Caco-2 (cell line): ENCODE measurements at regions of chr15 and their contacts with region 1.

Region 1: GRCh38 chr15:96122077-96122681 is 208.3 kb upstream of the NR2F2 start:
- DNase-seq: no peak
- H3K4me3 ChIP-seq: no peak overlapping the region
- H3K4me3 Mint-ChIP-seq: peak overlapping the region; percentile 23
- H3K27ac Mint-ChIP-seq: peak overlapping the region; percentile 66
- H3K4me1 ChIP-seq: peaks cover 49% of the 10 kb centered on the region
- H3K4me1 Mint-ChIP-seq: peaks cover 54% of the 10 kb centered on the region
- H3K27me3 ChIP-seq: no peaks in the 10 kb centered on the region
- H3K27me3 Mint-ChIP-seq: no peaks in the 10 kb centered on the region
- CTCF ChIP-seq: no peak

Region 2: GRCh38 chr15:95799286-95800200 is 322.6 kb before region 1 on chr15:
- CTCF ChIA-PET with region 1: no interaction called
- POLR2A ChIA-PET with region 1: no interaction called
- intact Hi-C with region 1: no loop called
- DNase-seq: peak in 1 of 2 experiments; percentile 15
- H3K4me3 ChIP-seq: no peak overlapping the region
- H3K4me3 Mint-ChIP-seq: no peak overlapping the region
- H3K27ac Mint-ChIP-seq: no peak overlapping the region
- H3K4me1 ChIP-seq: peaks cover 5% of the 10 kb centered on the region; the same call in 1 of the 2 replicates
- H3K4me1 Mint-ChIP-seq: no peaks in the 10 kb centered on the region
- H3K27me3 ChIP-seq: no peaks in the 10 kb centered on the region
- H3K27me3 Mint-ChIP-seq: no peaks in the 10 kb centered on the region
- CTCF ChIP-seq: no peak

Region 3: GRCh38 chr15:95922431-95922830 is 199.7 kb before region 1 on chr15:
- CTCF ChIA-PET with region 1: no interaction called
- POLR2A ChIA-PET with region 1: no interaction called
- intact Hi-C with region 1: loop called (anchors 2 kb)
- DNase-seq: peak; percentile 52 to 57
- H3K4me3 ChIP-seq: no peak overlapping the region
- H3K4me3 Mint-ChIP-seq: no peak overlapping the region
- H3K27ac Mint-ChIP-seq: no peak overlapping the region
- H3K4me1 ChIP-seq: no peaks in the 10 kb centered on the region
- H3K4me1 Mint-ChIP-seq: peaks cover 7% of the 10 kb centered on the region
- H3K27me3 ChIP-seq: no peaks in the 10 kb centered on the region
- H3K27me3 Mint-ChIP-seq: no peaks in the 10 kb centered on the region
- CTCF ChIP-seq: peak in 1 of 2 experiments; percentile 33

Region 4: DNA sequence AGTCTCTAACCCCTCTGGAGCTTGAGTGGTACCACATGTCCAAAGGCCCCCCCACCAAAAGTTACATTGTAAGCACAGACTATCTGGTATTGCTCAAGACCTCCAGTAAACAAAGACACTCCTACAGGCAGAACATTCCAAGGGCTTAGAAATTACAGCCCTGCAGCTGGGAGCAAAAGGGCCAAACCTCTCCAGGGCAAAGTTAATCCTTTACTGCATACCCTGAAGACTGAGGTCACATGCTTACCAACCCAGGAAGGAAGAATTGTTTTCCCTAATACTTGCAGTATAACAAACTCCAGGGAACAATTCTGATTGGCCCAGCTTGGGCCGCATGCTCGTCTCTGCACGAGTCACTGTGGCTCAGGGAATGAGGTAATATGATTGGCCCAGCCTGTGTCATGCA is 57.8 kb before region 1 on chr15:
- CTCF ChIA-PET with region 1: no interaction called
- POLR2A ChIA-PET with region 1: no interaction called
- intact Hi-C with region 1: loop called (anchors 5 kb)
- DNase-seq: peak; percentile 83 to 87
- H3K4me3 ChIP-seq: no peak overlapping the region
- H3K4me3 Mint-ChIP-seq: peak overlapping the region; percentile 69
- H3K27ac Mint-ChIP-seq: peak overlapping the region; percentile 40
- H3K4me1 ChIP-seq: peaks cover 38% of the 10 kb centered on the region
- H3K4me1 Mint-ChIP-seq: peaks cover 18% of the 10 kb centered on the region
- H3K27me3 ChIP-seq: no peaks in the 10 kb centered on the region
- H3K27me3 Mint-ChIP-seq: no peaks in the 10 kb centered on the region
- CTCF ChIP-seq: no peak

Region 5: GRCh38 chr15:96234109-96234892 is 112.1 kb after region 1 on chr15:
- CTCF ChIA-PET with region 1: no interaction called
- POLR2A ChIA-PET with region 1: no interaction called
- intact Hi-C with region 1: no loop called
- DNase-seq: no peak
- H3K4me3 ChIP-seq: no peak overlapping the region
- H3K4me3 Mint-ChIP-seq: no peak overlapping the region
- H3K27ac Mint-ChIP-seq: no peak overlapping the region
- H3K4me1 ChIP-seq: peaks cover 22% of the 10 kb centered on the region
- H3K4me1 Mint-ChIP-seq: peaks cover 33% of the 10 kb centered on the region
- H3K27me3 ChIP-seq: no peaks in the 10 kb centered on the region
- H3K27me3 Mint-ChIP-seq: no peaks in the 10 kb centered on the region
- CTCF ChIP-seq: no peak